PC-9 (cell line): ENCODE measurements at regions of chr15 and their contacts with region 1.

Region 1: DNA sequence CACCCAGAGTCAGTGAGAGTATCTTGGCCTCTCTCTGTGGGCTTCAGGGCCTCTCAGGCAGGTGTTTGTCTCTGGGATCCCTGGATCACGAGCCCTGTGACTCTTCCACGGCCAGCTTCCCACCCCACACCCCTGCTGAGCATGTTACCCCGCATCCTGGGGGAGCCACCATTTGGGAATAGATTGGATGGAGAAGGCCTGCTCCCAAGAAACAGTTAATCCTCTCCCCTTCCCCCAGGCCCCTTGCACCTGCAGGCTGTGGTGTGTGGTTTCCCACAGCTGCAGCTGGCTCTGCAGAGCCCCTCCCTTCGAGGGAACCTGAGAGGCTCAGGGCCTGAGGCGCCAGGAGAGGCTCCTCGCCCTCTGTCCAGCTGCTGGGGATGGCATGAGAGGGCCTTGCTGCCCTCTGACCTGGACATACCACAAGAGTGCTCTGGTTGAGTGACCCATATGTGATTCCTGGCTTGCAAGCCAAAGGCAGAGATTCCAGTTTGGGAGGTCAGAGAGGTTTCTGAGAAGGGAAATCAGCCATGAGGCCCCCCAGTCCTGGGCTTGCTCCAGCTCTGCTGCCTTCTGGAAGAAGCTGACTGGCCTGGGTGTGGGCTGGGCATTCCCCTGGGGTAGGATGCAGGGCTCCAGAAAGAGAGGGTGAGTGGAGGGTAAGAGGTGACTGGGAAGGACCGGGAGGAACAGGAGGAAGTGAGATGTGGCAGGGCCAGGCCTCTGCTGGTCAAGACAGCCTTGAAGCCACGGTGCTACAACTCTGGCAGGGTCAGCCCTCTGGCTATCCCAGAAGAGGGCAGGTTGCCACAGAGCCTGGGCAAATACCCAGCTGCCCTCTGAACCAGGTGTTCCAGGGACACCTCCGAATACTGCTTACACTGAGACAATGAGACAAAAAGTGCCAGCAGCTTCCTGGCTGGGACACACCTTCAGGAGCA is 15.9 kb upstream of the SRP14 start:
- DNase-seq: peak; percentile 94 to 96
- H3K4me3 ChIP-seq: no peak overlapping the region
- H3K27ac ChIP-seq: peak overlapping the region; percentile 85
- H3K4me1 ChIP-seq: peaks cover 76% of the 10 kb centered on the region
- H3K27me3 ChIP-seq: no peaks in the 10 kb centered on the region
- CTCF ChIP-seq: no peak

Region 2: DNA sequence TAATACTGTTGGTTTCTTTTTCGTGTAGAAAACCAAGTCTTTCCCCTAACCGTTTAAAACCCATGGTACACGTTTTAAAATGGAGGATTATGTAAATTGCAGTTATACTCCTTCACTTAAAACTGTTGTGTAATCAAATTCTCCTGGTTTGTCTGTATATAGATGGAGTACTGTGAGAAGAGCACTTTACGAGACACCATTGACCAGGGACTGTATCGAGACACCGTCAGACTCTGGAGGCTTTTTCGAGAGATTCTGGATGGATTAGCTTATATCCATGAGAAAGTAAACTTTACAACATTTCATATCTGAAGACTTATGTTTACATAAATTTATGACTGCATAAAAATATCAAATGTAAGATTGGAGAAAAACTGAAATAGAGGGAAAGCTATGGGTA is 67.1 kb before region 1 on chr15:
- CTCF ChIA-PET with region 1: no interaction called
- POLR2A ChIA-PET with region 1: no interaction called
- intact Hi-C with region 1: no loop called
- DNase-seq: no peak
- H3K4me3 ChIP-seq: no peak overlapping the region
- H3K27ac ChIP-seq: no peak overlapping the region
- H3K4me1 ChIP-seq: no peaks in the 10 kb centered on the region
- H3K27me3 ChIP-seq: no peaks in the 10 kb centered on the region
- CTCF ChIP-seq: no peak

Region 3: GRCh38 chr15:40069178-40070165 is 14.6 kb after region 1 on chr15:
- CTCF ChIA-PET with region 1: no interaction called
- POLR2A ChIA-PET with region 1: no interaction called
- intact Hi-C with region 1: loop called (anchors 2 kb)
- DNase-seq: peak; percentile 87 to 97
- H3K4me3 ChIP-seq: no peak overlapping the region
- H3K27ac ChIP-seq: 0 out of 2 replicates have a peak overlapping the region, but pooled peaks have one; percentile 1
- H3K4me1 ChIP-seq: peaks cover 48% of the 10 kb centered on the region
- H3K27me3 ChIP-seq: no peaks in the 10 kb centered on the region
- CTCF ChIP-seq: no peak

Region 4: DNA sequence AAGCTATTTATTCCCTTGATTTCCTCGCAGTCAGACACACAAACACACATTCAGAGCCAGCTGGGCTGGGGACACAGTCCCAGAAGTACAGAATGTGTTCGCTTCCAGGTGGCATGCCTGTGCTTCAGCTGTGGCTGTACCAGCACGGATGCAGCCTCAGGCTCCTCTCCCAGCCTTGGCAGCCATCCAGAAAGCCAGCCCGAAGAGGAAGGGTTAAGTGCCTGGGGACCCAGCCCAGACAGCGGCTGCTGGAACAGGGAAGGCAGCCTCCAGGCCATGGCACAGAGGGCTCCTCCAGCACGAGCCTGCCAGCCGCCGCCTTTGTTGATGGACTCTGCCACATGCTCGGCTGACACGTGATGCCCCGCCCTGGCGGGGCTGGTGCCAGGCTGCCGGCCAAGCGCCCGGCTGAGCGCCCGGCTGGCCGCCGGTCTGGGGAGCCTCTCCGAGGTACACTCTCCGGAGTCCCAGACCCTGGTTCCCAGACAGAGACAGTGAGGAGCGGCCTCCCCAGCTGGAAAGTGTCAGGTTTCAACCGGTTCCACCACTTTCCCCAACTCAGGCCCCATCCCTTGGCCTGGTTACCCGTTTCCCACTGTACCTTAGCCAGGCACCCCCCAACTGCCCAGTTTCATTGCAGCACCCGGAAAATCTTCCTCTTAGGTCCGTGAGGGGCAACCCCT is 48.4 kb after region 1 on chr15:
- CTCF ChIA-PET with region 1: interaction called, 12 read pairs
- POLR2A ChIA-PET with region 1: interaction called, 3 read pairs
- intact Hi-C with region 1: loop called (anchors 1 kb)
- DNase-seq: peak; percentile 78 to 95
- H3K4me3 ChIP-seq: peak overlapping the region; percentile 42; the same call in 1 of the 2 replicates
- H3K27ac ChIP-seq: peak overlapping the region; percentile 55
- H3K4me1 ChIP-seq: peaks cover 98% of the 10 kb centered on the region
- H3K27me3 ChIP-seq: no peaks in the 10 kb centered on the region
- CTCF ChIP-seq: no peak

Region 5: GRCh38 chr15:40160689-40161688 is 106.1 kb after region 1 on chr15 and contains the start of gene BUB1B:
- CTCF ChIA-PET with region 1: no interaction called
- POLR2A ChIA-PET with region 1: no interaction called
- intact Hi-C with region 1: loop called (anchors 2 kb)
- DNase-seq: peak; percentile 91 to 92
- H3K4me3 ChIP-seq: peak within 1 kb of the TSS; percentile 67
- H3K27ac ChIP-seq: no peak within 1 kb of the TSS
- H3K4me1 ChIP-seq: peaks cover 29% of the 10 kb centered on the region
- H3K27me3 ChIP-seq: no peaks in the 10 kb centered on the region
- CTCF ChIP-seq: no peak
- total RNA-seq, gene BUB1B: 74.3 and 75.3 TPM in 2 replicates

Region 6: DNA sequence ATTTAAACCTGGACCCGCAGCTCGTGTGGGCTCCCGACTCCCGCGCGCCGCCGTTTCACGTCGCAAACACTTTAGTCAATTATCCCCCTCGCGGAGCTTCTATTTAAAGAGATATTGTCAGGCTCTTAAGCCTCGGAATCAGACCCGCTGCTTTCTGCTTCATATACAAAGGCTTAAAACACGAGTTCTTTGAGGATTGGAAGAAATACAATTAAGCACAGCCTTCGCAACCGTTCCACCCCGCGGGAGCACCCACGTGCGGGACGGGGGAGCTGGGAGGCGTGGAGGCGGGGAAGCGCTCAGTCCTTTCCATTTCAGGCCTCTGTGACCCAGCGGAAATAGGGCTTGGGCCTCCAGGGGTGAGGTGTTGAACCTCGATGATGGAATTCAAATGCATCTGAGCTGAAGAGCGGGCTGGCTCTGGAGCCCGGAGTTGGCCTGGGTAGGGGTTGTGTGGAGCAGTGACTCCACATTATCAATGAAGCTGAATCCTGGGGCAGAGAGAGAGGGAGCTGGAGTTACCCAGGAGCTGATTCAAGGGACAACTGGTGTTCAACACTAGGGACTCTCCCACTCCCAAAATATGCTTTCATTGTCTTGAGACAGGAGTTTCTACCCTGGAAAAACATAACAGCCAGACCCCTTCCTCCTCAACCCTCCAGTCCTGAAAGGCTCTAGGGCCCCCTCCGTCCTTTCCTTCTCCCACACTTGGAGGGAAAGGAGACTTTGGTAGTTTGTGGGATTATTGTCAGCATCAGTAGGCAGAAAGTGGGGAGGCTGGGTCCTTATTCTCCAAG is 225.6 kb after region 1 on chr15:
- CTCF ChIA-PET with region 1: no interaction called
- POLR2A ChIA-PET with region 1: no interaction called
- intact Hi-C with region 1: no loop called
- DNase-seq: no peak
- H3K4me3 ChIP-seq: no peak overlapping the region
- H3K27ac ChIP-seq: no peak overlapping the region
- H3K4me1 ChIP-seq: no peaks in the 10 kb centered on the region
- H3K27me3 ChIP-seq: no peaks in the 10 kb centered on the region
- CTCF ChIP-seq: no peak